ENCODE measurements at regions of chr2 and their contacts with region 1.

Region 1: GRCh38 chr2:210252699-210253606 is 27.7 kb upstream of the ACADL start:
- DNase-seq: peak; percentile 63 to 80
- H3K4me3 ChIP-seq: no peak overlapping the region
- H3K27ac ChIP-seq: peak overlapping the region in 1 of 3 donors; percentile 32
- H3K4me1 ChIP-seq: peaks cover 2 to 3% of the 10 kb centered on the region in 2 donors
- H3K27me3 ChIP-seq: no peaks in the 10 kb centered on the region
- CTCF ChIP-seq: no peak
- POLR2A ChIP-seq: no peak

Region 2: DNA sequence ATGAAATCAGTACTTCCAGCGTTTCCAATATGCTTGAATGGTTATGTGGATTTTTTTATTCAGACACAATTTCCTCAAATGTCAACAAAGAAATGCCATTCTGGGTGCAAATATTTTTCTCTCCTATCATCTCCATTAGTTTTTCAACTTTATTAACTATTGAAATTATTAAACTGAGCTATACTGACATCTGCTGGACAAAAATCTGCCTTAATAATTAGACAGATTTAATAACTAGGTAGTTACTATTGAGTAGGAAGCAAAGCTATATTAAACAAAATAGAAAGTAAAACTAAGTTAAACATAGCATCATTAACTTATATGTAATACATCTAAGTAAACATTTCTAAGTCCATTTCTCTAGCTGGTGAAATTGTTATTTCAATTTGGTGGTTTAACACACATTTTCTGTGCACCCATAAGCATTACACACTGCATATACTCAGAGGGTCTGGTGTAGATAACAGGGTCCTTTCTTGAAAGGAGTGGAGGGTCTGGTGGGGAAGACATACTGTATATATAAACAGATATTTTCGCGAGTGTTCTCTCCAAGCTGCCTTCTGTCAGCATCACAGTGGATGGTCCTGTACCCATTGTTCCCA is 146.6 kb after region 1 on chr2:
- intact Hi-C with region 1: loop called (anchors 2 kb)
- DNase-seq: no peak
- H3K4me3 ChIP-seq: no peak overlapping the region
- H3K27ac ChIP-seq: no peak overlapping the region
- H3K4me1 ChIP-seq: no peaks in the 10 kb centered on the region
- H3K27me3 ChIP-seq: no peaks in the 10 kb centered on the region
- CTCF ChIP-seq: peak in 4 of 6 experiments; percentile 12 to 64 (median 54)
- POLR2A ChIP-seq: no peak

Region 3: GRCh38 chr2:210663631-210664089 is 410.7 kb after region 1 on chr2:
- intact Hi-C with region 1: no loop called
- DNase-seq: no peak
- H3K4me3 ChIP-seq: no peak overlapping the region
- H3K27ac ChIP-seq: no peak overlapping the region
- H3K4me1 ChIP-seq: no peaks in the 10 kb centered on the region
- H3K27me3 ChIP-seq: no peaks in the 10 kb centered on the region
- CTCF ChIP-seq: no peak
- POLR2A ChIP-seq: no peak

Measured in thyroid gland (tissue), 4 donors.